Head of caudate nucleus (tissue), 42 donors: ENCODE measurements at regions of chr14 and their contacts with region 1.

Region 1: GRCh38 chr14:88189417-88190191 is 133.5 kb downstream of the KCNK10 start:
- DNase-seq: peak in 40 of 42 donors; percentile 23 to 94 (median 78)

Region 2: GRCh38 chr14:88380405-88380804 is 190.8 kb after region 1 on chr14:
- intact Hi-C with region 1: loop called (anchors 5 kb)
- DNase-seq: peak in 2 of 42 donors; percentile 5 to 36